CD4-positive, alpha-beta T cell (primary cell): ENCODE measurements at regions of chr2 and their contacts with region 1.

Region 1: DNA sequence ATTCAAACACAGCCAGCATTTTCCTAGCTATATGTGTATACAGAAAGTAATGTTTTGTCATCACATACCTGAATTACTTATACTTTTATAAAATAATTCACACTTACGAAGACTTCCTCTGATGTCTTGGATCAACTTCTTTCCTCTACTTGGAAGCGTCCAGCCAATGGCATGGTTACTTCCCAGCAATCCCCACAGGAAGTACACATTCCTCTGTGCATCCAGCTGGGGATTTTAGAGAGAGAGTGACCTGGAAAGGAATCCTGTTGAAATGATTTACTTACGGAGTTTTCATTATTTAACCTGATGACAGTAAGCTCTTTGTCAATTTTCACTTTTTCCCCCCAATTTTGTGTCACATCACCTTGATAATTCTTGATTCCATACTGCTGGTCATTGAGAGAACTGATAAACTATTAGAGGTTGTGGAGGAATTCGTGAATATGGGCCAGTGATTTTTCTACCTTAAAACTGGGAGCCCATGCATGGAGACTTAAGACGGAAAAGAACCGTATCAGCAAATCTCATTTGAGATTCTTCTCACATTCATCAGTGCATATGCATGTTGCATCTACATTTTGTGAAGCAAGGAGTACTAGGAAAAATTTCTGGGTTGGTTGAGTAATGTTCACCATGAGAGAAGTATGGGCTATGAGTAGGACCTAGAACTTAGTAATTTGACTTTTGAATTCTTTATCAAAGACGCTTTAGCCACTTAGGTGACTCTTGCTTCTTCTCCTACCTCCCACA is 9.0 kb upstream of the IL18R1 start:
- DNase-seq: no peak
- ATAC-seq: no peak
- H3K4me3 ChIP-seq: no peak overlapping the region
- H3K4me3 Mint-ChIP-seq: no peak overlapping the region
- H3K27ac ChIP-seq: no peak overlapping the region
- H3K27ac Mint-ChIP-seq: no peak overlapping the region
- H3K4me1 ChIP-seq: no peaks in the 10 kb centered on the region
- H3K4me1 Mint-ChIP-seq: no peaks in the 10 kb centered on the region
- H3K27me3 ChIP-seq: no peaks in the 10 kb centered on the region
- H3K27me3 Mint-ChIP-seq: no peaks in the 10 kb centered on the region
- CTCF ChIP-seq: no peak

Region 2: GRCh38 chr2:102251042-102251848 is 95.3 kb before region 1 on chr2:
- CTCF ChIA-PET with region 1: no interaction called
- POLR2A ChIA-PET with region 1: no interaction called
- intact Hi-C with region 1: no loop called
- DNase-seq: peak; percentile 48 to 84 (median 62)
- ATAC-seq: peak; percentile 87
- H3K4me3 ChIP-seq: peak overlapping the region; percentile 60
- H3K4me3 Mint-ChIP-seq: peak overlapping the region; percentile 96
- H3K27ac ChIP-seq: no peak overlapping the region
- H3K27ac Mint-ChIP-seq: peak overlapping the region; percentile 12
- H3K4me1 ChIP-seq: peaks cover 19% of the 10 kb centered on the region
- H3K4me1 Mint-ChIP-seq: peaks cover 23% of the 10 kb centered on the region
- H3K27me3 ChIP-seq: no peaks in the 10 kb centered on the region
- H3K27me3 Mint-ChIP-seq: no peaks in the 10 kb centered on the region
- CTCF ChIP-seq: peak; percentile 90

Region 3: DNA sequence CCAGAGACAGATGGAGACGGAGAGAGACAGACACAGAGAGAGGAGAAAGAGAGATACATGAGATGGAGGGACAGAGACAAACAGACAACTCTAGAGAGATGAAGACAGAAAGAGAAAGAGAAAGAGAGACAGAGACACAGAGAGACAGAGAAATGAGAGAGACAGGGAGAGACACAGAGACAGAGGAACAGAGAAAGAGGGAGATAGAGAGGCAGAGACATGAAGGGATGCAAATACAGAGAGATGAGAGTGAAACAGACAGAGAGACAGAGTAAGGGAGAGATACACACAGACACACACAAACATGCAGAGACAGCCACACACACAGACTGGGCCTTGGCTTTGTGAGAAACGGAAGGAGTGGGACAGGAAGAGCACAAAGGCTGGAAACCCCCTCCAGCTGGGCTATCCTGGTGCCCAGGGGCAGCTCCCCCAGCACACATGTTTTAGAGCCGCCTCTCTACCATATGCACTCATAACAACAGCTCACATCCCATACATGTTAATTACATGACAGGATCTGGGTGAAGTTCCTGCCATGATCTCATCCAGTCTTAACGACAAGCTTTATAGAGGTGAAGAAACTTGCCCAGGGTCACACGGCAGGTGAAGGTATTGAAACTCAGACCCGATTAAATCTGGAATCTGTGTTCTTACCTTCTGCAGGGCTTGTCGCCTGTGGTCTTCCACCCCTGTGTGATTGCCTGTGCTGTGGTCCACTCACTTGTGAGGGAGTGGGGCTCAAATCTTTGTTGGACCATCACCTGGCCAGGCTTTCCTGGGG is 41.4 kb after region 1 on chr2:
- CTCF ChIA-PET with region 1: no interaction called
- POLR2A ChIA-PET with region 1: no interaction called
- intact Hi-C with region 1: loop called in 1 of 2 experiments (anchors 5 kb)
- DNase-seq: no peak
- ATAC-seq: no peak
- H3K4me3 ChIP-seq: no peak overlapping the region
- H3K4me3 Mint-ChIP-seq: no peak overlapping the region
- H3K27ac ChIP-seq: no peak overlapping the region
- H3K27ac Mint-ChIP-seq: no peak overlapping the region
- H3K4me1 ChIP-seq: peaks cover 4% of the 10 kb centered on the region
- H3K4me1 Mint-ChIP-seq: peaks cover 15% of the 10 kb centered on the region
- H3K27me3 ChIP-seq: no peaks in the 10 kb centered on the region
- H3K27me3 Mint-ChIP-seq: no peaks in the 10 kb centered on the region
- CTCF ChIP-seq: no peak